Activated naive CD4-positive, alpha-beta T cell treated with anti-CD3 and anti-CD28 coated beads for 36 hours (primary cell): ENCODE measurements at regions of chr21 and their contacts with region 1.

Region 1: GRCh38 chr21:33199516-33200217 is 30.1 kb upstream of the IFNAR2 start:
- DNase-seq: peak; percentile 93
- H3K4me3 Mint-ChIP-seq: no peak overlapping the region
- H3K27ac Mint-ChIP-seq: peak overlapping the region; percentile 43
- H3K4me1 Mint-ChIP-seq: peaks cover 31% of the 10 kb centered on the region
- H3K27me3 Mint-ChIP-seq: no peaks in the 10 kb centered on the region

Region 2: DNA sequence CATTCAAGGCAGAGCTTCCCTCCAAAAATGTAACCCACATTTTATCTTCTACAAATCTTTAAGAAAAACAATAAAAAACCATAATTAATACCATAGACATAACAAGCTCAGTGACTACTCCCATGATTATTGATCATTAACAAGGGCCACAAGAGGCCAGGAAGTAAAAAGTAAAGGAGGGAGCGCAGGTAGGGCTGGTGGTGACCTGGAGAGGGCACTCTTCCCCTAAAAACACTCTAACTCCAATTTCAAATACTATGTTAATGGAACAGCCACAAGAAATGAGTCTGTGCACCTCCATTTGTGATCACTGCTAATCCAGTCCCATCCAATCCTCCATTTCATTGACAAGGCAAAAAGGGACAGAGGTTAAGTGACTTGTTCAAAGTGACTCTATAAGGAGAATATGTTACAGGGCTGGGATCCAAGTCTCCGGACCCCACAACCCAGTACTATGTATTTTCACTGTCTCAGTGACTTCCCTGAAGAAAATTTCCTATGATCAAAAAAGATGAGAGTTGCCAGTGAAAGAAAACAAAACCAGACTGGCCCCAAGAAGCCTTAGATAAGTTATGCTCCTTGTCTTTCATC is 546.3 kb before region 1 on chr21:
- CTCF ChIA-PET with region 1: no interaction called
- intact Hi-C with region 1: loop called (anchors 2 kb)
- DNase-seq: peak; percentile 50
- H3K4me3 Mint-ChIP-seq: no peak overlapping the region
- H3K27ac Mint-ChIP-seq: no peak overlapping the region
- H3K4me1 Mint-ChIP-seq: peaks cover 3% of the 10 kb centered on the region
- H3K27me3 Mint-ChIP-seq: no peaks in the 10 kb centered on the region

Region 3: GRCh38 chr21:32978341-32979270 is 221.1 kb before region 1 on chr21:
- CTCF ChIA-PET with region 1: no interaction called
- intact Hi-C with region 1: no loop called
- DNase-seq: no peak
- H3K4me3 Mint-ChIP-seq: no peak overlapping the region
- H3K27ac Mint-ChIP-seq: no peak overlapping the region
- H3K4me1 Mint-ChIP-seq: no peaks in the 10 kb centered on the region
- H3K27me3 Mint-ChIP-seq: peaks cover 3% of the 10 kb centered on the region

Region 4: GRCh38 chr21:32994305-32994704 is 205.4 kb before region 1 on chr21:
- CTCF ChIA-PET with region 1: interaction called, 19 read pairs
- intact Hi-C with region 1: loop called (anchors 1 kb)
- DNase-seq: no peak
- H3K4me3 Mint-ChIP-seq: no peak overlapping the region
- H3K27ac Mint-ChIP-seq: no peak overlapping the region
- H3K4me1 Mint-ChIP-seq: no peaks in the 10 kb centered on the region
- H3K27me3 Mint-ChIP-seq: peaks cover 6% of the 10 kb centered on the region

Region 5: DNA sequence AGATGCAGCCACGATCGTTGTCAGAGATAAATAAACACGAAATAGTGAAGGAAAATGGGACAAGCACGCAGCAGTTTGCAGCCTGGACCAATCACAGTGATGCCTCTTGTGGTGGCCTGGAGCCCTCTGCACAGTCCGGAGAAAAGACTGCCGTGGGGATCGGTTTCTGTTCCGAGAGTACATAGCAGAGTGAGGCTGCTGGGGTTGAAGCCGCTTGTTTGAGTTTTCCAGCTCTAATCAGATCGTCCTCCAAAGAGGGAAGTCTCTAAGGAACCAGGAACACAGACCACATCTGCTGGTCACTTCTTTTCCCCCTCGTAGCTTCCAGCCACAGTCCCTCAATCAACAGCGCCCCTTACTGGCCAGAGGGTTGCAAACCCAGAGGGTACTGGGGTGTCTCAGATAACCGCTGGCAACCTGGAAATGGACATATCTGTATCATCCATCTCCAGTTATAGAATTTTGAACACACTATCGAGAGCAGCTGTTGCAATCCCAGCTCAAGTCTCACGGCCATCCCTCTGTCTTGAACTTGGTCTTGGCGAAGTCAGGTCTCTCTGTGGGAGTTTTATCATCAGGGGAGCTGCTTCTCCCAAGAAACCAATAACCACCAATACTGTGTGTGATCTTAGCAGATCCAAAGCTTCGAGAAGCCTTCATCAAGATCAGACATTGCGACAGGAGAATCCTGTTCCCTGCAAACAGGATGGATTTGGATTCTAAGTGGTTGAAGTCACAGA is 72.3 kb before region 1 on chr21:
- CTCF ChIA-PET with region 1: interaction called, 13 read pairs
- intact Hi-C with region 1: loop called (anchors 1 kb)
- DNase-seq: peak; percentile 84
- H3K4me3 Mint-ChIP-seq: peak overlapping the region; percentile 55
- H3K27ac Mint-ChIP-seq: no peak overlapping the region
- H3K4me1 Mint-ChIP-seq: peaks cover 4% of the 10 kb centered on the region
- H3K27me3 Mint-ChIP-seq: no peaks in the 10 kb centered on the region

Region 6: DNA sequence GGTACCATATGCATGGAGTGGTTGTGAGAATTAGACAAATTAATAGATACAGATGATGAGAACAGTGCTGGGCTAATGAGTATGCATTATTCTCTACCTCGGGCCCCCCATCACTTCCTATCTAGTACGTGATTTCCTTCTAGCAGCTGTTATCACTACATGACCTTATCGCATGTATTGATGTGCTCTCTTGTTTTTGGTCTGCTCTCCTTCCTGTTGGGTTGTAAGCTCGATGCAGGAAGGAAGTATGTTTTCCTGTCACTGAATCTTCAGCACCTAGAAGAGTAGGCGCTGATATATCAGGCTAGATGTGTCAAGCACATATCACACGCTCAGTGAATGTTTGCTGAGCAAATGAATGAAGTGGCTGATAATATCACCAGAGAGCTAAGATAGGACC is 13.8 kb before region 1 on chr21:
- CTCF ChIA-PET with region 1: interaction called, 32 read pairs
- intact Hi-C with region 1: no loop called
- DNase-seq: peak; percentile 48
- H3K4me3 Mint-ChIP-seq: no peak overlapping the region
- H3K27ac Mint-ChIP-seq: peak overlapping the region; percentile 79
- H3K4me1 Mint-ChIP-seq: peaks cover 51% of the 10 kb centered on the region
- H3K27me3 Mint-ChIP-seq: no peaks in the 10 kb centered on the region

Region 7: GRCh38 chr21:33247599-33247998 is 47.9 kb after region 1 on chr21:
- CTCF ChIA-PET with region 1: no interaction called
- intact Hi-C with region 1: no loop called
- DNase-seq: no peak
- H3K4me3 Mint-ChIP-seq: no peak overlapping the region
- H3K27ac Mint-ChIP-seq: peak overlapping the region; percentile 78
- H3K4me1 Mint-ChIP-seq: peaks cover 66% of the 10 kb centered on the region
- H3K27me3 Mint-ChIP-seq: no peaks in the 10 kb centered on the region

Region 8: GRCh38 chr21:33324291-33325221 is 124.9 kb after region 1 on chr21 and contains the start of gene IFNAR1:
- CTCF ChIA-PET with region 1: interaction called, 9 read pairs
- intact Hi-C with region 1: loop called (anchors 1 kb)
- DNase-seq: peak; percentile 99
- H3K4me3 Mint-ChIP-seq: no peak within 1 kb of the TSS
- H3K27ac Mint-ChIP-seq: no peak within 1 kb of the TSS
- H3K4me1 Mint-ChIP-seq: peaks cover 28% of the 10 kb centered on the region
- H3K27me3 Mint-ChIP-seq: no peaks in the 10 kb centered on the region
- total RNA-seq, gene IFNAR1: 20.6 to 24.3 TPM

Region 9: DNA sequence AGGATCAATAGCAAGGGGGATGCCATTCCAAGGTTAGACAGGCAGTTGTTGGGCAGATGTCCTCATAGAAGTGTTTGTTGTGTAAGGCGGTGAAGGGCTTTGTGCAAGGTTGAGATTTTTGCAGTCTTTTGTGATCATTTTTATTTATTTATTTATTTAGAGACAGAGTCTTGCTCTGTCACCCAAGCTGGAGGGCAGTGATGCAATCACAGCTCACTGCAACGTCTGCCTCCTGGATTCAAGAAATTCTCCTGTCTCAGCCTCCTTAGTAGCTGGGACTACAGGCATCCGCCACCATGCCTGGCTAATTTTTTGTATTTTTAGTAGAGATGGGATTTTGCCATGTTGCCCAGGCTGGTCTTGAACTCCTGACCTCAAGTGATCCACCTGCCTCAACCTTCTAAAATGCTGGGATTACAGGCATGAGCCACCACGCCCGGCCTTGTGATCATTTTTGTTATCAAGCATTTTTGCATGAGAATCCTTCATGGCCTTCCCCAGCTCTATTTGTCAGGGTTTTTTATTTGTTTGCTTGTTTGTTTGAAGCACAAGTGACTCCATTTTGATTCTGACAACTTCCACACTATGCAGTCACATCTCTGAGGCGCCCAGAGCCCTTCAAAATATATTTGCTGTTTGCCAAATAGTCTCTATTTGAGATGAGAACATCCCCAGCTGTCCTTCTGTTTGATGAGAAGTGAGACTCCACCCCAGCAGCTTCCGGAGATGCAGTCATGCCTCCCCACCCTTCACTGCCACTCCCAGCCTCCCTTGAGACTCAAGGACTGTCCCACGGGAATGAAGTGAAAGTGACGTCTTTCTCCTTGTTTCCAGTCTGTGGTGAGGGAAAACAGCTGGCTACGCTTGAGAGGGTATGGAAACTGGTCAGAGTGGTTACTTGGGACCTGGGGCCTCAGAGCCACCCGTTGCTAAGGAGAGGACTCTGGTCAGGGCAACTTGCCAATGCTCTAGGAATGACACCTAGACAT is 242.1 kb after region 1 on chr21:
- CTCF ChIA-PET with region 1: interaction called, 50 read pairs
- intact Hi-C with region 1: loop called (anchors 1 kb)
- DNase-seq: no peak
- H3K4me3 Mint-ChIP-seq: no peak overlapping the region
- H3K27ac Mint-ChIP-seq: no peak overlapping the region
- H3K4me1 Mint-ChIP-seq: peaks cover 4% of the 10 kb centered on the region
- H3K27me3 Mint-ChIP-seq: no peaks in the 10 kb centered on the region